IMR-90 (cell line): ENCODE measurements at regions of chr19 and their contacts with region 1.

Region 1: DNA sequence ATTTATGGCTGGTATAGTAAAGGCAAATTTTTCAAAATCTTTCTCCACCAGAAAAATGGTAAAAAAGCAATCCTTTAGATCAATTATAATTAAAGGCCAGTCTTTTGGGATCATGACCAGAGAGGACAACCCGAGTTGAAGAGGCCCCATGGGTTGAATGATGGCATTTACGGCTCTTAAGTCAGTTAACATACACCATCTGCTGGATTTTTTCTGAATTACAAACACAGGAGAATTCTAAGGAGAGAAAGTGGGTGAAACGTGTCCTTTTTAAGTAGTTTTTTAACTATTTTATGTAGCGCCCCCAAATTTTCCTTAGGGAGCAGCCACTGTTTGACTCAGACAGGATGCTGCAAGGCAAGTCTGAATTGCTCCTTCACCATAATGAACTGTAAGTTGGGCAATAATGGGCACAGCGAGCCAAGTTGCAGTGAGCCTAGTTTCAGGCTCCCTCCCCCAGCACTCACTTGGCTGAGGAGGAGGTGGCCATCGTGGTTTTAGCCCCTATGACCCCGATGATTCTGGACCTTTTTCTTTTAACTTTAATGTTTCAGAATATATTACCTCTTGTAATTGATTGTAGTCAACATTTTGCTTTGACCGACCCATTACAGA is 13.6 kb upstream of the ZNF611 start:
- DNase-seq: peak; percentile 57
- ATAC-seq: peak; percentile 87
- H3K4me3 ChIP-seq: no peak overlapping the region
- H3K27ac ChIP-seq: no peak overlapping the region
- H3K4me1 ChIP-seq: no peaks in the 10 kb centered on the region
- H3K27me3 ChIP-seq: no peaks in the 10 kb centered on the region
- CTCF ChIP-seq: peak; percentile 58
- POLR2A ChIP-seq: no peak
- RAD21 ChIP-seq: peak; percentile 72

Region 2: DNA sequence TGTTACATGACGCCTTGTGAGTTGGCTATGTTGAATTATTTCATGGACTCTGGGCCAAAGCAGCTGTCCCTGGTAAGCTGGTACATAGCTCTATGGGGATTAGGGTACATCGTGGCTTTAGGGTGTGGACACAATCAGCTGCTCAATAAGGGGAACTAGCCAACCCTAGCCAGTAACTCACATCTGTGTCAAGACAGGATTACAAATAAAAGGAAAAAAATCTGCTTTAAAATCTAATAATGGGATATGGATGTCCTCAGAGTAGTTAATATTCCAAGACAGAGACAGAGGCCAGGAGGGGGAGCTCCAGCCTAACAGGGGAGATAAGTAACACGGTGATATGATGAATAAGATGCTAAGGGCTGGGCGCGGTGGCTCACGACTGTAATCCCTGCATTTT is 500.2 kb before region 1 on chr19:
- CTCF ChIA-PET with region 1: no interaction called
- POLR2A ChIA-PET with region 1: no interaction called
- dilution Hi-C with region 1: no loop called
- in situ Hi-C with region 1: no loop called
- intact Hi-C with region 1: loop called (anchors 1 kb)
- DNase-seq: peak; percentile 33
- ATAC-seq: peak; percentile 91
- H3K4me3 ChIP-seq: no peak overlapping the region
- H3K27ac ChIP-seq: no peak overlapping the region
- H3K4me1 ChIP-seq: no peaks in the 10 kb centered on the region
- H3K27me3 ChIP-seq: no peaks in the 10 kb centered on the region
- CTCF ChIP-seq: peak; percentile 65
- POLR2A ChIP-seq: no peak
- RAD21 ChIP-seq: peak; percentile 65

Region 3: GRCh38 chr19:52397310-52398080 is 350.9 kb before region 1 on chr19 and contains the start of gene ZNF528:
- CTCF ChIA-PET with region 1: no interaction called
- POLR2A ChIA-PET with region 1: no interaction called
- dilution Hi-C with region 1: no loop called
- in situ Hi-C with region 1: no loop called
- intact Hi-C with region 1: loop called (anchors 5 kb)
- DNase-seq: peak; percentile 92
- ATAC-seq: peak; percentile 100
- H3K4me3 ChIP-seq: peak within 1 kb of the TSS; percentile 86
- H3K27ac ChIP-seq: peak within 1 kb of the TSS; percentile 83
- H3K4me1 ChIP-seq: no peaks in the 10 kb centered on the region
- H3K27me3 ChIP-seq: no peaks in the 10 kb centered on the region
- CTCF ChIP-seq: no peak
- POLR2A ChIP-seq: peak; percentile 80
- RAD21 ChIP-seq: no peak
- total RNA-seq, gene ZNF528: 14.3 and 16.4 TPM in 2 replicates

Region 4: GRCh38 chr19:52535771-52536447 is 212.5 kb before region 1 on chr19:
- CTCF ChIA-PET with region 1: no interaction called
- POLR2A ChIA-PET with region 1: no interaction called
- dilution Hi-C with region 1: no loop called
- in situ Hi-C with region 1: no loop called
- intact Hi-C with region 1: loop called (anchors 10 kb)
- DNase-seq: peak; percentile 61
- ATAC-seq: peak; percentile 99
- H3K4me3 ChIP-seq: peak overlapping the region; percentile 57
- H3K27ac ChIP-seq: peak overlapping the region; percentile 75; the same call in 1 of the 2 replicates
- H3K4me1 ChIP-seq: no peaks in the 10 kb centered on the region; the same call in 1 of the 2 replicates
- H3K27me3 ChIP-seq: no peaks in the 10 kb centered on the region
- CTCF ChIP-seq: no peak
- POLR2A ChIP-seq: no peak
- RAD21 ChIP-seq: no peak

Region 5: GRCh38 chr19:52700673-52701072 is 47.8 kb before region 1 on chr19:
- CTCF ChIA-PET with region 1: no interaction called
- POLR2A ChIA-PET with region 1: no interaction called
- dilution Hi-C with region 1: no loop called
- in situ Hi-C with region 1: no loop called
- intact Hi-C with region 1: no loop called
- DNase-seq: no peak
- ATAC-seq: no peak
- H3K4me3 ChIP-seq: no peak overlapping the region
- H3K27ac ChIP-seq: no peak overlapping the region
- H3K4me1 ChIP-seq: no peaks in the 10 kb centered on the region
- H3K27me3 ChIP-seq: no peaks in the 10 kb centered on the region
- CTCF ChIP-seq: no peak
- POLR2A ChIP-seq: no peak
- RAD21 ChIP-seq: no peak

Region 6: DNA sequence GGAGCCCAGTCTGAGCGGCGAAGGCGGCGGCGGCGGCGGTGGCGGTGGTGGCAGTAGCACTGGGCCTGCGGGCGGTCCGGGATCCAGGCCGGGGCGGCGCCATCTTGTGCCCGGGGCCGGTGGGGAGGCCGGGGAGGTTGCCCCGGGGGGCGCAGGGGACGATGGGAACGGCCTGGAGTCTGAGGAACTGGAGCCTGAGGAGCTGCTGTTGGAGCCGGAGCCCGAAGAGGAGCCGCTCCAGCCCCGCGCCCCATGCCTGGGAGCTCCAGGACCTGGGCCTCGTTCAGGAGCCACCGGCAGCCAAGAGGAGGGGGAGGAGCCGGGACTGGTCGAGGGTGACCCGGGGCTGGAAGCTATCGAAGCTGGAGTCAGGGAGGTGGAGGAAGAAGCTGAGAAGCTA is 61.4 kb after region 1 on chr19:
- CTCF ChIA-PET with region 1: no interaction called
- POLR2A ChIA-PET with region 1: no interaction called
- dilution Hi-C with region 1: no loop called
- in situ Hi-C with region 1: no loop called
- intact Hi-C with region 1: no loop called
- DNase-seq: no peak
- ATAC-seq: no peak
- H3K4me3 ChIP-seq: no peak overlapping the region
- H3K27ac ChIP-seq: no peak overlapping the region
- H3K4me1 ChIP-seq: no peaks in the 10 kb centered on the region
- H3K27me3 ChIP-seq: no peaks in the 10 kb centered on the region
- CTCF ChIP-seq: no peak
- POLR2A ChIP-seq: no peak
- RAD21 ChIP-seq: no peak

Region 7: DNA sequence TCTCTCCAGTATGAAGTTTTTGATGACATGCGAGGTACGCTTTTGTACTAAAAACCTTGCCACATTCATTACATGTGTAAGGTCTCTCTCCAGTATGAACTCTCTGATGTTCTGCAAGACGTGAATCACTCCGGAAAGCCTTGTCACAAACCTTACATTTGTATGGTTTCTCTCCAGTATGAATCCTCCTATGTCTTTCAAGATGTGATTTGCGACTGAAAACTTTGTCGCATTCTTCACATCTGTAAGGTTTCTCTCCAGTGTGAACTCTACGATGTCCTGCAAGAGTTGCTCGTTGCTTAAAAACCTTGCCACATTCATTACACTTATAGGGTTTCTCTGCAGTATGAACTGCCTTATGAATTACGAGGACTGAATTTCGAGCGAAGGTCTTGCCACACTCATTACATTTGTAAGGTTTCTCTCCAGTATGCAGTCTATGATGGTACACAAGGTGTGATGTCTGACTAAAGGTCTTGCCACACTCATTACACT is 132.5 kb after region 1 on chr19:
- CTCF ChIA-PET with region 1: no interaction called
- POLR2A ChIA-PET with region 1: no interaction called
- dilution Hi-C with region 1: no loop called
- in situ Hi-C with region 1: no loop called
- intact Hi-C with region 1: no loop called
- DNase-seq: no peak
- ATAC-seq: no peak
- H3K4me3 ChIP-seq: no peak overlapping the region
- H3K27ac ChIP-seq: no peak overlapping the region
- H3K4me1 ChIP-seq: no peaks in the 10 kb centered on the region
- H3K27me3 ChIP-seq: no peaks in the 10 kb centered on the region
- CTCF ChIP-seq: no peak
- POLR2A ChIP-seq: no peak
- RAD21 ChIP-seq: no peak